ENCODE measurements at regions of chr22 and their contacts with region 1.

Region 1: GRCh38 chr22:30253205-30253852 is 6.8 kb upstream of the LIF start:
- DNase-seq: no peak
- H3K4me3 ChIP-seq: no peak overlapping the region
- H3K27me3 ChIP-seq: no peaks in the 10 kb centered on the region
- CTCF ChIP-seq: no peak

Region 2: DNA sequence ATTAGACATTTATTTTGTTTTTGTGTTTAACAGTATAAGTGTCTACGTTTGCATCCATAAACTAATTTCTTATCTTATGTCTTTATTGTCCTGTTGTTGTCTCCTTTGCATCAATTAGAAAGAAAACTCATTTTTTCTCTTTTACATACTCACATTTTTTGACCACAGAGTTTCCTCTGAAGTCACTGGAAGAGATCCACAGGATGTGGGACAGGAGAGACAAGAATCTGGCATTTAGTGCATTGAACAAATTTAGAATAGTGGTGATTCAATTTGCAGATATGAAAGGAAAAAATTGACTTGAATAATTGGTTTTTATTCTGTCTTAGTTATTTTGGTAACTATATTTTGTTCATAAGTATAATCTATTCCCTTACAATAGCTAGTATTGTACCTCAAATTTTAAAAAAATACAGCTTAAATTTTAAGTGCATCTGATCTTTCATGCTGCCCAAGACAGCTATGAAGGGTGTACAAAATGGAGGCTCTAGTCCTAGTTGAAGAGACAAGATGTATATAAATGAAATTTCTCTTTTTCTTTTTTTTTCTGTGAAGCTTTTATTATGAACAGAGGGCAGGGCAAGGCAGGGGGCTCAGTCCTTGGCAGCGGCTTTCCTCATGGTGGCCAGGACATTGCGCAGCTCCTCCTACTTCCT is 148.7 kb before region 1 on chr22:
- CTCF ChIA-PET with region 1: interaction called, 12 read pairs
- POLR2A ChIA-PET with region 1: no interaction called
- DNase-seq: no peak
- H3K4me3 ChIP-seq: no peak overlapping the region
- H3K27me3 ChIP-seq: no peaks in the 10 kb centered on the region
- CTCF ChIP-seq: no peak

Region 3: DNA sequence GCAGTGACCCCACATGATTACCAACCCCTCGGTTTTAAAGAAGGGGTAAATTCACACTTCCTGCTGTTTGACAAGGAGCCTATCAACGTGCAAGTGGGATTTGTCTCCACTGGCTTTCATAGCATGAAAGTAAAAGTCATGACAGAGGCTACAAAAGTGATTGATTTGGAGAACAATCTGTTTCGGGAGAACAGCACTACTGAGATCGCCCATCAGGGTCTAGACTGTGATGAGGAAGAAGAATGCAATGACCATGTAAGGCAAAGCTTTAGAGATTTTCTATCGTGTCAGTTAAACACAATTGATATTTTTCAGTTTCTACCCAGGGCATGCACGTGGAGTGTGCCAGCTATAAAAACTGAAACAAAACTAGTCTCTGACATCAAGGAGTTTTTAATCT is 131.4 kb before region 1 on chr22:
- CTCF ChIA-PET with region 1: interaction called, 21 read pairs
- POLR2A ChIA-PET with region 1: no interaction called
- DNase-seq: no peak
- H3K4me3 ChIP-seq: no peak overlapping the region
- H3K27me3 ChIP-seq: no peaks in the 10 kb centered on the region; the same call in 1 of the 2 replicates
- CTCF ChIP-seq: no peak

Region 4: GRCh38 chr22:30241576-30242371 is 11.6 kb before region 1 on chr22:
- CTCF ChIA-PET with region 1: interaction called, 11 read pairs
- POLR2A ChIA-PET with region 1: no interaction called
- DNase-seq: no peak
- H3K4me3 ChIP-seq: no peak overlapping the region
- H3K27me3 ChIP-seq: no peaks in the 10 kb centered on the region
- CTCF ChIP-seq: no peak

Region 5: GRCh38 chr22:30386960-30387827 is 133.9 kb after region 1 on chr22 and contains the start of gene RNF215:
- CTCF ChIA-PET with region 1: interaction called, 17 read pairs
- POLR2A ChIA-PET with region 1: no interaction called
- DNase-seq: no peak
- H3K4me3 ChIP-seq: peak within 1 kb of the TSS; percentile 76
- H3K27me3 ChIP-seq: no peaks in the 10 kb centered on the region
- CTCF ChIP-seq: peak; percentile 82
- polyA plus RNA-seq, gene RNF215: 11.1 and 15.8 TPM in 2 replicates